Upper lobe of right lung (tissue), 1 donor: ENCODE measurements at regions of chr11 and their contacts with region 1.

Region 1: GRCh38 chr11:46889689-46890475 is 28.5 kb downstream of the LRP4 start:
- DNase-seq: no peak
- ATAC-seq: peak; percentile 95
- H3K4me3 ChIP-seq: no peak overlapping the region
- H3K27ac ChIP-seq: no peak overlapping the region
- H3K4me1 ChIP-seq: no peaks in the 10 kb centered on the region
- H3K27me3 ChIP-seq: no peaks in the 10 kb centered on the region
- CTCF ChIP-seq: peak; percentile 89

Region 2: GRCh38 chr11:46625391-46625790 is 264.5 kb before region 1 on chr11:
- intact Hi-C with region 1: no loop called
- DNase-seq: no peak
- ATAC-seq: no peak
- H3K4me3 ChIP-seq: no peak overlapping the region
- H3K27ac ChIP-seq: no peak overlapping the region
- H3K4me1 ChIP-seq: peaks cover 3% of the 10 kb centered on the region
- H3K27me3 ChIP-seq: no peaks in the 10 kb centered on the region
- CTCF ChIP-seq: no peak

Region 3: GRCh38 chr11:47152953-47153950 is 263.4 kb after region 1 on chr11:
- intact Hi-C with region 1: loop called (anchors 5 kb)
- DNase-seq: peak; percentile 82
- ATAC-seq: peak; percentile 92
- H3K4me3 ChIP-seq: no peak overlapping the region
- H3K27ac ChIP-seq: no peak overlapping the region
- H3K4me1 ChIP-seq: peaks cover 23% of the 10 kb centered on the region
- H3K27me3 ChIP-seq: no peaks in the 10 kb centered on the region
- CTCF ChIP-seq: peak; percentile 94

Region 4: GRCh38 chr11:47259178-47259977 is 369.5 kb after region 1 on chr11:
- intact Hi-C with region 1: no loop called
- DNase-seq: no peak
- ATAC-seq: peak; percentile 69
- H3K4me3 ChIP-seq: no peak overlapping the region
- H3K27ac ChIP-seq: no peak overlapping the region
- H3K4me1 ChIP-seq: peaks cover 41% of the 10 kb centered on the region
- H3K27me3 ChIP-seq: no peaks in the 10 kb centered on the region
- CTCF ChIP-seq: peak; percentile 57